Caco-2 (cell line): ENCODE measurements at regions of chrX and their contacts with region 1.

Region 1: GRCh38 chrX:53093748-53094583 is at the start of gene KANTR:
- DNase-seq: peak; percentile 90 to 92
- H3K4me3 ChIP-seq: peak within 1 kb of the TSS; percentile 76
- H3K4me3 Mint-ChIP-seq: peak within 1 kb of the TSS; percentile 87
- H3K27ac Mint-ChIP-seq: peak within 1 kb of the TSS; percentile 82
- H3K4me1 ChIP-seq: no peaks in the 10 kb centered on the region
- H3K4me1 Mint-ChIP-seq: peaks cover 6% of the 10 kb centered on the region
- H3K27me3 ChIP-seq: no peaks in the 10 kb centered on the region
- H3K27me3 Mint-ChIP-seq: no peaks in the 10 kb centered on the region
- CTCF ChIP-seq: no peak
- total RNA-seq, gene KANTR: 13.2 and 15.0 TPM in 2 replicates

Region 2: DNA sequence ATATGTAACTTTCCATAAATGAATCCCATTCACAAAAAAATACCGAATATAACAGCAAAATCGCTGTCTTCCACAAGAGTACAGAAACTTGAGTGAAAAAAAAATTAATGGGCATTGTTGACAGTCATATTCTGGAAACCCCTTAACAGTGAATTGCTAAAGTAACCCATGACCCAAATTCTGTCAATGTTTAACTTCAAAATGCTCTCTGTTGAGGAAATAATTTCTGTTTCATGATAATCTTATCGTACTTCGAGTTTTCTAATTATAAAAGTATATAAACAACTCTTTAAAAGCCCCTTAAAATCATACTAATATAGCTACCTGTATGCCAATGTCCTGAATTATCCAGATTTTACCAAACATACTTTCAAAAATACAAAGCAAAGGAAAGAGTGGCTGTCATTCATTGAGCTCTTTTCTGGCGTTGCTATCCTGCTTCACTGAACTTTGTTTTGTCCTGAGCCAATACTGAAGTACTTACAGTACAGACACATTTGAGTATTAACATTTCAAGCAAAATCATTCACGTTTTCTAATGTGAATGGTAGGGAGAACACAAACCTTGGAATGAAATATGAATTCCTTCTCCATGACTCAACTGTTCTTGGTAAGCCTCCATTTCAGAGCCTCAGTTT is 228.5 kb before region 1 on chrX:
- CTCF ChIA-PET with region 1: no interaction called
- POLR2A ChIA-PET with region 1: no interaction called
- intact Hi-C with region 1: no loop called
- DNase-seq: no peak
- H3K4me3 ChIP-seq: no peak overlapping the region
- H3K4me3 Mint-ChIP-seq: no peak overlapping the region
- H3K27ac Mint-ChIP-seq: no peak overlapping the region
- H3K4me1 ChIP-seq: no peaks in the 10 kb centered on the region
- H3K4me1 Mint-ChIP-seq: no peaks in the 10 kb centered on the region
- H3K27me3 ChIP-seq: no peaks in the 10 kb centered on the region
- H3K27me3 Mint-ChIP-seq: no peaks in the 10 kb centered on the region
- CTCF ChIP-seq: no peak

Region 3: GRCh38 chrX:52995135-52996020 is 98.6 kb before region 1 on chrX:
- CTCF ChIA-PET with region 1: no interaction called
- POLR2A ChIA-PET with region 1: no interaction called
- intact Hi-C with region 1: loop called (anchors 5 kb)
- DNase-seq: peak; percentile 93 to 95
- H3K4me3 ChIP-seq: peak overlapping the region; percentile 84
- H3K4me3 Mint-ChIP-seq: peak overlapping the region; percentile 95
- H3K27ac Mint-ChIP-seq: peak overlapping the region; percentile 99
- H3K4me1 ChIP-seq: peaks cover 3% of the 10 kb centered on the region; the same call in 1 of the 2 replicates
- H3K4me1 Mint-ChIP-seq: peaks cover 9% of the 10 kb centered on the region
- H3K27me3 ChIP-seq: no peaks in the 10 kb centered on the region
- H3K27me3 Mint-ChIP-seq: no peaks in the 10 kb centered on the region
- CTCF ChIP-seq: peak; percentile 45 to 62

Region 4: DNA sequence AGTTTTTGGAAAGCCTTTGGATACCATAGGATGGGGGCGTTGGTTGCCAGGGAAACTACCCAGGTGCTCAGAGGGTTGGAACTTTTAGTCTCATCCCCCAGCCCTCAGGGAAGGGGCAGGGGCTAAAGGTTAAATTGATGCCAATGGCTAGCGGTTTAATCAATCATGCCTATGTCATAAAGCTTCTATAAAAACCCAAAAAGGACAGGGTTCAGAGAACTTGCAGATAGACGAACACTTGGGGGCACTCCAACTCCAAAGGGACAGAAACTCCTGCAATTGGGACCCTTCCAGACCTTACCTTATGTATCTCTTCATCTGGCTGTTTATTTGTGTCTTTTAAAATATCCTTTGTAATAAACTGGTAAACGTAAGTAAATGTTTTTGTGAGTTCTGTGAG is 75.3 kb before region 1 on chrX:
- CTCF ChIA-PET with region 1: interaction called, 3 read pairs
- POLR2A ChIA-PET with region 1: no interaction called
- intact Hi-C with region 1: loop called (anchors 1 kb)
- DNase-seq: no peak
- H3K4me3 ChIP-seq: no peak overlapping the region
- H3K4me3 Mint-ChIP-seq: no peak overlapping the region
- H3K27ac Mint-ChIP-seq: no peak overlapping the region
- H3K4me1 ChIP-seq: no peaks in the 10 kb centered on the region
- H3K4me1 Mint-ChIP-seq: no peaks in the 10 kb centered on the region
- H3K27me3 ChIP-seq: no peaks in the 10 kb centered on the region
- H3K27me3 Mint-ChIP-seq: peaks cover 3% of the 10 kb centered on the region
- CTCF ChIP-seq: no peak

Region 5: GRCh38 chrX:53047228-53047627 is 46.7 kb before region 1 on chrX:
- CTCF ChIA-PET with region 1: no interaction called
- POLR2A ChIA-PET with region 1: no interaction called
- intact Hi-C with region 1: loop called (anchors 1 kb)
- DNase-seq: no peak
- H3K4me3 ChIP-seq: no peak overlapping the region
- H3K4me3 Mint-ChIP-seq: no peak overlapping the region
- H3K27ac Mint-ChIP-seq: no peak overlapping the region
- H3K4me1 ChIP-seq: no peaks in the 10 kb centered on the region
- H3K4me1 Mint-ChIP-seq: no peaks in the 10 kb centered on the region
- H3K27me3 ChIP-seq: no peaks in the 10 kb centered on the region
- H3K27me3 Mint-ChIP-seq: peaks cover 6% of the 10 kb centered on the region
- CTCF ChIP-seq: peak in 1 of 2 experiments; percentile 34

Region 6: GRCh38 chrX:53071604-53072417 is 22.2 kb before region 1 on chrX:
- CTCF ChIA-PET with region 1: interaction called, 7 read pairs
- POLR2A ChIA-PET with region 1: no interaction called
- intact Hi-C with region 1: loop called (anchors 1 kb)
- DNase-seq: peak; percentile 60 to 75
- H3K4me3 ChIP-seq: peak overlapping the region; percentile 54
- H3K4me3 Mint-ChIP-seq: peak overlapping the region; percentile 82
- H3K27ac Mint-ChIP-seq: peak overlapping the region; percentile 68
- H3K4me1 ChIP-seq: no peaks in the 10 kb centered on the region
- H3K4me1 Mint-ChIP-seq: peaks cover 8% of the 10 kb centered on the region
- H3K27me3 ChIP-seq: no peaks in the 10 kb centered on the region
- H3K27me3 Mint-ChIP-seq: no peaks in the 10 kb centered on the region
- CTCF ChIP-seq: peak; percentile 48 to 50

Region 7: GRCh38 chrX:53081925-53082772 is 11.8 kb before region 1 on chrX and contains the start of gene TSPYL2:
- CTCF ChIA-PET with region 1: interaction called, 4 read pairs
- POLR2A ChIA-PET with region 1: no interaction called
- intact Hi-C with region 1: loop called (anchors 1 kb)
- DNase-seq: peak; percentile 95
- H3K4me3 ChIP-seq: peak within 1 kb of the TSS; percentile 76
- H3K4me3 Mint-ChIP-seq: peak within 1 kb of the TSS; percentile 90
- H3K27ac Mint-ChIP-seq: peak within 1 kb of the TSS; percentile 86
- H3K4me1 ChIP-seq: no peaks in the 10 kb centered on the region
- H3K4me1 Mint-ChIP-seq: peaks cover 7% of the 10 kb centered on the region
- H3K27me3 ChIP-seq: no peaks in the 10 kb centered on the region
- H3K27me3 Mint-ChIP-seq: no peaks in the 10 kb centered on the region
- CTCF ChIP-seq: no peak
- total RNA-seq, gene TSPYL2: 30.9 and 33.4 TPM in 2 replicates

Region 8: GRCh38 chrX:53224860-53225797 is 131.2 kb after region 1 on chrX and contains the start of gene KDM5C:
- CTCF ChIA-PET with region 1: no interaction called
- POLR2A ChIA-PET with region 1: no interaction called
- intact Hi-C with region 1: loop called (anchors 10 kb)
- DNase-seq: peak; percentile 85 to 91
- H3K4me3 ChIP-seq: peak within 1 kb of the TSS; percentile 81
- H3K4me3 Mint-ChIP-seq: peak within 1 kb of the TSS; percentile 96
- H3K27ac Mint-ChIP-seq: peak within 1 kb of the TSS; percentile 99
- H3K4me1 ChIP-seq: peaks cover 6% of the 10 kb centered on the region
- H3K4me1 Mint-ChIP-seq: no peaks in the 10 kb centered on the region
- H3K27me3 ChIP-seq: no peaks in the 10 kb centered on the region
- H3K27me3 Mint-ChIP-seq: no peaks in the 10 kb centered on the region
- CTCF ChIP-seq: no peak
- total RNA-seq, gene KDM5C: 84.5 and 90.5 TPM in 2 replicates